ENCODE measurements at regions of chr2 and their contacts with region 1.

Region 1: DNA sequence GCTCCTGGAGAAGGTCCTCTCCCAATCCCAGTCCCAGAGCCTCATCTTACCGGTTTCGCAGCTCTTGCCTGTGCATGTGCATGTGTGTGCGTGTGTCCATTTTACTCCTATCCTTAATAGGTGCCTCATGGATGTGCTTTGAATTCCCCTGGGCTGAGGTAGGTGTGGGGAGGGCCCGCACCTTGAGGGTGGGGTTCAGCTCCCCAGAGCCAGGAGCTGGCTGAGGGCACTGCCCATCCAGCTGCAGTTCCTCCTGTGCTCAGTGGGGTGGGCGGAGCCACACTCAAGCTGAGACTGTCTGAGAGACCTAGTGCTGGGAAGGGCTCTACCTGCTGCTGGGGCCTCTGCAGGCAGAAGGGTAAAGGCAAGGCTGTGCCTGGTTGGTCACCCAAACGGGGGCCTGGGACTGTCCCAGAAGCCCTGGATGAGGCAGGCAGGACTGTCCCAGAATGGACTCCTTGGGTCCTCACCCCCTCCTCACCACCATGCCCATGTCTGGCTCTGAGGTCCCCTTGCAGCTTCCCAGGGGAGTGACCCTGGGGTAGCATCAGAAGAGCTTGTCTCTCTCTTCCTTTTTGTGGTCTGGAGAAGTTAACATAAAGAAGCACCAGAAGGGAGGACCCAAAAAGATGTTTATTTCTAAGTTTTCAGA is 8.9 kb downstream of the GDF7 start:
- DNase-seq: no peak

Region 2: DNA sequence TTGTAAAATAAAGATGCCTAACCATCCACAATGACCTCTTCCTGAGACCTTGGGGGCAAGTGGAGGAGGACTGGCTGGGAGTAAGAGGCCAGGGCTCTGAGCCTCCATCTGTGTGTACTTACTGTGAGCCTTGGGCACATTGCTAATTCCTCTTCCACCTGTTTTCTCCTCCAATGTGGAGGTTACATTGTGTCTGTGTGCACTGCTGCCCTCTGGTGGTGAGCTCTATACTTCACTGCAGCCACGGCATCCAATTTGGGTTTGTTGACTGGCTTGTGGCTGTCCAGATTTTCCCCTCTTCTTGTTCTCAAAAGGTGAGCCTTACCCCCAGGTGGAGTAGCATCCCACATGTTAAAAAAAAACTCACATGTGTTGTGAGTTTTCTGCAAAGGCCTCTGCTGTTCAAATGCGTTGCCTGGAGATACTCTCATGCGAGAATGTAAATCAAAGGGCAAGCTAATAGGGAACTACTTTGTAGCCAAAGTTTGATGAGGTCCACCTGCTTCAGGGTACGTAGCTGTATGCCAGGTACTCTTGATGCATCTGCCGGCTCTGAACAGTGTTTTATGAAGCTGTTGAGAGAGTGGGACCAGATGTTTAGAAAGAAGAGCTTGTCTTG is 287.2 kb after region 1 on chr2:
- in situ Hi-C with region 1: loop called (anchors 25 kb)
- DNase-seq: peak; percentile 91

Measured in G401 (cell line).